Activated CD4-positive, alpha-beta memory T cell treated with anti-CD3 and anti-CD28 coated beads for 36 hours (primary cell): ENCODE measurements at regions of chr10 and their contacts with region 1.

Region 1: GRCh38 chr10:86399879-86400704 is 33.5 kb upstream of the GRID1 start:
- DNase-seq: peak; percentile 97
- H3K4me3 Mint-ChIP-seq: peak overlapping the region; percentile 89
- H3K27ac Mint-ChIP-seq: peak overlapping the region; percentile 87
- H3K4me1 Mint-ChIP-seq: peaks cover 10% of the 10 kb centered on the region
- H3K27me3 Mint-ChIP-seq: no peaks in the 10 kb centered on the region

Region 2: GRCh38 chr10:85362401-85362800 is 1037.7 kb before region 1 on chr10:
- CTCF ChIA-PET with region 1: no interaction called
- POLR2A ChIA-PET with region 1: no interaction called
- intact Hi-C with region 1: no loop called
- DNase-seq: no peak
- H3K4me3 Mint-ChIP-seq: no peak overlapping the region
- H3K27ac Mint-ChIP-seq: no peak overlapping the region
- H3K4me1 Mint-ChIP-seq: no peaks in the 10 kb centered on the region
- H3K27me3 Mint-ChIP-seq: no peaks in the 10 kb centered on the region

Region 3: DNA sequence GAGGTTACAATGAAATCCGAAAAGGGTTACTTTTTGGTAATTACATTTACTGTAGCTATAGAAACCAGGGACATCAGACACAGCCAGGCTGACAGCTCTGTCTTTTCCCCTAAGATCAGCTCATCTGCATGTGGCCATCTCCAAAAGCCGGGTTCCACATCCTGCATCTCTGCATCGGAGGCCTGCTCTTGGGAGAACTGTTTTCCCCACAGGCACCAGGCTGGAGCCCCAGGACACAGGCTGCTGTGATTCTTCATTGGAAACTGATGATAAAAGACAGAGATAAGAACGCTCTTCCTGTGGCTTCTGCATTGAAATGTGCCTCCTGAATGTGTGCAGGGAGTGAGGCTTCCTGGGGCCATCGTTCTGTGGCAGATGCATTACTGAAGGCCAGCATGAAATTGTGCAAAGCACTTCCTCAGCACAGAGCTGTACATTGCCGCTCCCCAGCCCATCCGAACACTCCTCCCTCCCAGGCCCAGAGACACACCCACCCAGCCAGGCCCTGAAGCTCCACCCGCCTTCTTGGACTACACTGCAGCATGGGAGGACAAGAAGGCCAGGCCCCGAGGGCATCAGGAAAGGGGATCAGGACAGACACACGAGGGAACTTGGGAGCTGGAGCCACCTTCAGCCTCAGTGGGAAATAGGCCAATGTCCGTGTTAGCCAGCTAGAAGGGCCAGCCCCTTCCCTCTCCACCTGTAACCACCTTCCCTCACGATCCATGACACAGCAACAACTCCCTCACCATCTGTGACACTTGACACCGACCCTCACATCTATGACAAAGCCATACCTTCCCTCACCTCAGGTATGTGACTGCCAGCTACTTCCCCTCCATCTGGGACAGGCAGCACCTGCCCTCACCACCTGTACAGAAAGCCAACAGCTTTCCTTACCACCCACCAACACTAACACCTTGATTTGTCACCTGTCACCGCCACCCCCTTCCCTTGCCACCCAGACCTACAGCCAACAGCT is 146.7 kb before region 1 on chr10:
- CTCF ChIA-PET with region 1: no interaction called
- POLR2A ChIA-PET with region 1: no interaction called
- intact Hi-C with region 1: no loop called
- DNase-seq: no peak
- H3K4me3 Mint-ChIP-seq: no peak overlapping the region
- H3K27ac Mint-ChIP-seq: no peak overlapping the region
- H3K4me1 Mint-ChIP-seq: no peaks in the 10 kb centered on the region
- H3K27me3 Mint-ChIP-seq: peaks cover 6% of the 10 kb centered on the region

Region 4: DNA sequence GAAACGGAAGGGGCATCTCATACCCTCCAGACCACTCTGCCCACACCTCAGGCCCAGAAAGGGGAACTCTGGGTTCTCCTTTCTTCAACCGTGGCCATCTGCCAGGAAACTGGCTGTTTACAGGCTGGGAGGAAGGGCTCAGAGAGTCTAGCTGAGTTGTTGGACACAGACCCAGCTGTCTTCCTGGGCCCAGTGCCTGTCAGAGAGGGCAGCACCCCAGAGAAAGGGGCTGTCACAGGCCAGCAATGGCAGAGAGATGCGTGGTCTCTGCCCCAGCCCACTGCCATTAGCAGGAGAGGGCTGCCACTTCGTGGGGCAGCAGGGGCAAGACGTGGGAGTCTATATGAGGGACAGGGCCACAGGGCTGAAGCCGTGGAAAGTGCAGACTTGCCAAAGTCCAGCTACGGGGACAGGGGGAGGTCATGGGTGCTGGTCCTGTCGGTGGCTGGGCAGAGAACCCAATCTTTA is 44.5 kb before region 1 on chr10:
- CTCF ChIA-PET with region 1: no interaction called
- POLR2A ChIA-PET with region 1: no interaction called
- intact Hi-C with region 1: no loop called
- DNase-seq: no peak
- H3K4me3 Mint-ChIP-seq: no peak overlapping the region
- H3K27ac Mint-ChIP-seq: no peak overlapping the region
- H3K4me1 Mint-ChIP-seq: no peaks in the 10 kb centered on the region
- H3K27me3 Mint-ChIP-seq: peaks cover 5% of the 10 kb centered on the region

Region 5: GRCh38 chr10:86411281-86411841 is 11.3 kb after region 1 on chr10:
- CTCF ChIA-PET with region 1: interaction called, 57 read pairs
- POLR2A ChIA-PET with region 1: interaction called, 30 read pairs
- intact Hi-C with region 1: loop called (anchors 1 kb)
- DNase-seq: peak; percentile 66
- H3K4me3 Mint-ChIP-seq: peak overlapping the region; percentile 40
- H3K27ac Mint-ChIP-seq: peak overlapping the region; percentile 91
- H3K4me1 Mint-ChIP-seq: peaks cover 41% of the 10 kb centered on the region
- H3K27me3 Mint-ChIP-seq: no peaks in the 10 kb centered on the region

Region 6: DNA sequence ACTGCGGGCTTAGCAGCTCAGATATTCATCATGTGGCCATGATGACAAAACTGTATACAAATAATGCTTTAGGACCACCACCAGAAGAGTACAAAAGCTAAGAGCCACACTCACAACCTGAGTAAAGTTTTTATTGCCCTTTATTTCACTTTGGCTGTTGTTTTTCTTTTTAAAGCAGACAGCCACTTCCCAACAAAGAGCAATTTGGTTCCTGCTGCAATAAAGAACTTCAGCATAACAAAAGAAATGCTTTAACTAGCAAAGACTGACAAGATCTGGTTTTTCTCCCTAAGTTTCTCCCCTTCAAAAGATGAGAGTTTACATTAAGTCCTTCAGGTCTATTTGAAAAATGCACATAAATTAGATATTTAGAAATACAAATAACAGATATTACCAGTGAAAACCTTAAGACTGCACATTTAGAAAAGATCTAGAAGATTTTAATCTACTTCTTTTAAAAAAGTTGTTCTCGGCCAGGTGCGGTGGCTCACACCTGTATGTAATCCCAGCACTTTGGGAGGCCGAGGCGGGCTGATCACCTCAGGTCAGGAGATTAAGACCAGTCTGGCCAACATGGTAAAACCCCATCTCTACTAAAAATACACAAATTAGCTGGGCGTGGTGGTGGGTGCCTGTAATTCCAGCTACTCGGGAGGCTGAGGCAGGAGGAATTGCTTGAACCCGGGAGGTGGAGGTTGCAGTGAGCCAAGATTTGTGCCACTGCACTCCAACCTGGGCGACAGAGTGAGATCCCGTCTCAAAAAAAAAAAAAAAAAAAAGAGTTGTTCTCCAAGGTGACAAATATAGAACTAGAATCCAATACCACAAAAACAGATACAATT is 62.1 kb after region 1 on chr10:
- CTCF ChIA-PET with region 1: interaction called, 13 read pairs
- POLR2A ChIA-PET with region 1: no interaction called
- intact Hi-C with region 1: no loop called
- DNase-seq: no peak
- H3K4me3 Mint-ChIP-seq: no peak overlapping the region
- H3K27ac Mint-ChIP-seq: no peak overlapping the region
- H3K4me1 Mint-ChIP-seq: no peaks in the 10 kb centered on the region
- H3K27me3 Mint-ChIP-seq: no peaks in the 10 kb centered on the region

Region 7: DNA sequence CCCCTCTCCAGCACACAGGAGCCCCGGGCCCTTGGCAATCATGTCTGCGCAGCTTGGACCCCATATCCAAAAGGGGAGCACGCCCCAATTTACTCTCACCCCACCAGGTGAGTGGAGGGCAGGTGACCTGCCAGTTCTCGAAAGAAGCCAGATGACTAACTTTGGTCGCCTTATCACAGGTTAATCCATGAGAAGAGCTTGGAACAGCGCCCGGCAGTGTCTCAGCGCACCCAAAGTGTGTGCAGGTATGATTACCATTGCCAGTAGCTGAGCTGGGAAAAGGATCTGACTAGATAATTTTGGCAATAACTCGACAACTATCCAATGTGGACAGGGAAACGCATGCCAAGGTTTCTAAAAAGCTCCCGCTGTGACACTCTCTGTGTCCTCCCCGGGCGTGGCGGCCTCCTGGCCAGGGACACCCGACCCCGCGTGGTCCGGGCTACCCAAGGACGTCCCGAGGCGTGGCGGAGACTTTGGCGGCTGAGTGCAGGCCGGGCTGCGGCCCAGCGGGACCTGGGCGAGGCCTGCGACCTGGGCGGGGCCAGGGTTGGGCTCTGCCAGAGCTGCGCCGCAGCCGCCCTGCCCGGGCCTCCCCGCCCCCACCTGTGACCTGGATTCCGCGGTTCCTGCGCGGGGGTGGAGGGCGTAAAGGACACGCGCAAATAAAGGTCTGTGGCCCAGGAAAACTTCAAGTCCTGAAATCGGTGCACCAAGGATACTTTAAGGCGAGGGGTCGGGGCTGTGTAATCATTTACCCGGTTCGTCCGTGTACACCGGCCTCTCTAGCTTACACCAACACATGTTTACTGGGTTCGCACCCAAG is 135.2 kb after region 1 on chr10:
- CTCF ChIA-PET with region 1: interaction called, 6 read pairs
- POLR2A ChIA-PET with region 1: no interaction called
- intact Hi-C with region 1: loop called (anchors 5 kb)
- DNase-seq: peak; percentile 65
- H3K4me3 Mint-ChIP-seq: peak overlapping the region; percentile 65
- H3K27ac Mint-ChIP-seq: peak overlapping the region; percentile 72
- H3K4me1 Mint-ChIP-seq: peaks cover 17% of the 10 kb centered on the region
- H3K27me3 Mint-ChIP-seq: no peaks in the 10 kb centered on the region

Region 8: GRCh38 chr10:86775056-86775869 is 375.2 kb after region 1 on chr10:
- CTCF ChIA-PET with region 1: no interaction called
- POLR2A ChIA-PET with region 1: no interaction called
- intact Hi-C with region 1: no loop called
- DNase-seq: no peak
- H3K4me3 Mint-ChIP-seq: no peak overlapping the region
- H3K27ac Mint-ChIP-seq: no peak overlapping the region
- H3K4me1 Mint-ChIP-seq: peaks cover 8% of the 10 kb centered on the region
- H3K27me3 Mint-ChIP-seq: no peaks in the 10 kb centered on the region